OCI-LY7 (cell line): ENCODE measurements at regions of chr16 and their contacts with region 1.

Region 1: DNA sequence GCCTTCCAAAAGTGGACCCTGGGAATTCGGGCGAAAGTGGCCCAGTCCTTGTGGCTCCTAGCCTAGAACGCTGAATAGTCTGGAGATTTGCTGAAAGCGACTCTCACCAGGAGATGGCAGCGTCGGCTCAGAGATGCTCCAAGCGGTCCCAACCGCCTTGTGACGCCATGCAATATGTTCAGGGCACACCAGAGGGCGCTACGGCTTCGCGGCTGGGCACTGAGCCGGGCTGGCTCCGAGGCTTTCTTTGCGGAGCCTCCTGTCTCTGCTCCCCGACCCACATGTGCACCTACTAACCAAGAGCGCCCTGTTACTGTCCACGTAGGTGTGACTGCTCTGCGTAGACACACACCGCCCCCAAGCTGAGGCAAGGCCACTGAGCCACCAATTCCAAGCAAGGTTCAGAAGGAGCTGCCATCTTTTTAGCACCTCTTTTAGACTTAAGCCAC is 36.9 kb downstream of the SYCE1L start:
- DNase-seq: peak; percentile 84
- H3K4me3 ChIP-seq: no peak overlapping the region
- H3K27ac ChIP-seq: no peak overlapping the region
- H3K4me1 ChIP-seq: no peaks in the 10 kb centered on the region
- CTCF ChIP-seq: peak; percentile 97

Region 2: GRCh38 chr16:77014441-77014840 is 221.6 kb before region 1 on chr16:
- CTCF ChIA-PET with region 1: no interaction called
- POLR2A ChIA-PET with region 1: no interaction called
- intact Hi-C with region 1: no loop called
- DNase-seq: no peak
- H3K4me3 ChIP-seq: no peak overlapping the region
- H3K27ac ChIP-seq: no peak overlapping the region
- H3K4me1 ChIP-seq: no peaks in the 10 kb centered on the region
- CTCF ChIP-seq: no peak

Region 3: GRCh38 chr16:77289331-77289809 is 53.3 kb after region 1 on chr16:
- CTCF ChIA-PET with region 1: no interaction called
- POLR2A ChIA-PET with region 1: no interaction called
- intact Hi-C with region 1: no loop called
- DNase-seq: no peak
- H3K4me3 ChIP-seq: no peak overlapping the region
- H3K27ac ChIP-seq: no peak overlapping the region
- H3K4me1 ChIP-seq: no peaks in the 10 kb centered on the region
- CTCF ChIP-seq: no peak

Region 4: GRCh38 chr16:77376358-77376757 is 140.3 kb after region 1 on chr16:
- CTCF ChIA-PET with region 1: no interaction called
- POLR2A ChIA-PET with region 1: no interaction called
- intact Hi-C with region 1: loop called (anchors 1 kb)
- DNase-seq: peak; percentile 10
- H3K4me3 ChIP-seq: no peak overlapping the region
- H3K27ac ChIP-seq: no peak overlapping the region
- H3K4me1 ChIP-seq: no peaks in the 10 kb centered on the region
- CTCF ChIP-seq: peak; percentile 57

Region 5: GRCh38 chr16:77437859-77438258 is 201.8 kb after region 1 on chr16:
- CTCF ChIA-PET with region 1: no interaction called
- POLR2A ChIA-PET with region 1: interaction called, 4 read pairs
- intact Hi-C with region 1: loop called (anchors 10 kb)
- DNase-seq: no peak
- H3K4me3 ChIP-seq: no peak overlapping the region
- H3K27ac ChIP-seq: no peak overlapping the region
- H3K4me1 ChIP-seq: no peaks in the 10 kb centered on the region
- CTCF ChIP-seq: peak; percentile 38; the same call in 1 of the 2 replicates

Region 6: GRCh38 chr16:77584205-77584859 is 348.2 kb after region 1 on chr16:
- CTCF ChIA-PET with region 1: interaction called, 3 read pairs
- POLR2A ChIA-PET with region 1: no interaction called
- intact Hi-C with region 1: loop called (anchors 1 kb)
- DNase-seq: peak; percentile 57
- H3K4me3 ChIP-seq: no peak overlapping the region
- H3K27ac ChIP-seq: no peak overlapping the region
- H3K4me1 ChIP-seq: no peaks in the 10 kb centered on the region
- CTCF ChIP-seq: peak; percentile 94

Region 7: GRCh38 chr16:77617990-77618389 is 381.9 kb after region 1 on chr16:
- CTCF ChIA-PET with region 1: no interaction called
- POLR2A ChIA-PET with region 1: no interaction called
- intact Hi-C with region 1: no loop called
- DNase-seq: no peak
- H3K4me3 ChIP-seq: no peak overlapping the region
- H3K27ac ChIP-seq: no peak overlapping the region
- H3K4me1 ChIP-seq: no peaks in the 10 kb centered on the region
- CTCF ChIP-seq: no peak

Region 8: GRCh38 chr16:77971306-77972271 is 735.5 kb after region 1 on chr16:
- CTCF ChIA-PET with region 1: no interaction called
- POLR2A ChIA-PET with region 1: no interaction called
- intact Hi-C with region 1: loop called (anchors 2 kb)
- DNase-seq: peak; percentile 72
- H3K4me3 ChIP-seq: no peak overlapping the region
- H3K27ac ChIP-seq: no peak overlapping the region
- H3K4me1 ChIP-seq: no peaks in the 10 kb centered on the region
- CTCF ChIP-seq: peak; percentile 92